Mammary epithelial cell (primary cell): ENCODE measurements at regions of chr14 and their contacts with region 1.

Region 1: GRCh38 chr14:77554207-77554606 is 55.6 kb upstream of the ISM2 start:
- DNase-seq: no peak
- H3K4me3 ChIP-seq: no peak overlapping the region
- H3K27ac ChIP-seq: no peak overlapping the region
- H3K4me1 ChIP-seq: no peaks in the 10 kb centered on the region
- H3K27me3 ChIP-seq: no peaks in the 10 kb centered on the region
- CTCF ChIP-seq: no peak

Region 2: GRCh38 chr14:77325746-77326094 is 228.5 kb before region 1 on chr14:
- CTCF ChIA-PET with region 1: no interaction called
- dilution Hi-C with region 1: no loop called
- in situ Hi-C with region 1: no loop called
- intact Hi-C with region 1: loop called (anchors 2 kb)
- DNase-seq: no peak
- H3K4me3 ChIP-seq: no peak overlapping the region
- H3K27ac ChIP-seq: no peak overlapping the region
- H3K4me1 ChIP-seq: peaks cover 8% of the 10 kb centered on the region
- H3K27me3 ChIP-seq: no peaks in the 10 kb centered on the region
- CTCF ChIP-seq: no peak